Activated CD4-positive, alpha-beta T cell treated with anti-CD3 and anti-CD28 coated beads for 36 hours (primary cell): ENCODE measurements at regions of chr5 and their contacts with region 1.

Region 1: DNA sequence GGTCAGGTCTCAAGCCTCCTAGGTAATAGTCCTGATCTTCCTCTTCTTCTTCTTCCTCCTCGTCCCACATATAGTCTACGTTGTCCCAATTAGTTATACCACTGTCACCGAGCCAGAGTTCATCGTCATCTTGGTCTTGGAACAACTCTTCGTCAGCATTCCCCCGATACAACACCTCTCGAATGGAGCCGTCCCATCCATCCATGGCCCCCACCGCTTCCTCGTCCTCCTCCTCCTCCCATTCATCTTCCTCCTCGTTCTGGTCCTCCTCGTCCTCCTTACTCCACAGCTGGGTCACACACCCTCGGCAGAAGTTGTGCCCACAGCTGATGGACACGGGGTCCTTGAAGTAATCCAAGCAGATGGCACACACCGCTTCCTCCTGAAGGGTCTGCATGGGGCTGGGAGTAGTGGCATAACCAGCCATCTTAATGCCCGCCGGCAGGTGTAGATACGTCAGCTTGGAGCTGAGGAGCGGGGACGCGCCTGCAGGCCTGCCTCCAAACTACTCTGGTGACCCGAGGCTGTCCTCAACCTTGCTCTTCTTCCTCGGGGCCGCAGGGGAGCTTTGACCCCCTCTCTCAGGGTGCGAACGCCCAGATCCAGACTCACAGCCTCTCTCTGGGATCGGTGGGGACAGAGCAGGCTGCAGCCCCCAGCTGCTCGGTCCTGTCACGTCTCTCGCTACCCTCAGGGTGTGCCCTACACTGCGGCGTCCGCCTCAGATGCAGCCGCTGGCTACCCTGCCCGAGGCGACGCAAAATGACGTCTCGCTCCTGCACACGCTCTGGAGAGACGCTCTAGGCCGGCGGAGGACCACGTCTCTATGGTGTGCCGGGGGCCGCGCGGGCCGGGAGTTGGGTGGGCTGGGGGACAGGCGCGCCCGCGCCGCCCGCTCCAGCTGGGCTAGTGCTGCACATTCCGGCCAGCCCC is at the start of gene TRIM52:
- DNase-seq: peak; percentile 95
- ATAC-seq: peak; percentile 85
- H3K4me3 Mint-ChIP-seq: peak within 1 kb of the TSS; percentile 91
- H3K27ac Mint-ChIP-seq: peak within 1 kb of the TSS; percentile 95
- H3K4me1 Mint-ChIP-seq: peaks cover 38% of the 10 kb centered on the region
- H3K27me3 Mint-ChIP-seq: no peaks in the 10 kb centered on the region
- total RNA-seq, gene TRIM52: 10.4 to 13.1 TPM

Region 2: GRCh38 chr5:181243512-181244343 is 16.9 kb before region 1 on chr5 and contains the start of gene RACK1:
- CTCF ChIA-PET with region 1: interaction called, 8 read pairs
- POLR2A ChIA-PET with region 1: interaction called, 23 read pairs
- intact Hi-C with region 1: loop called (anchors 1 kb)
- DNase-seq: peak; percentile 94
- ATAC-seq: peak; percentile 70
- H3K4me3 Mint-ChIP-seq: peak within 1 kb of the TSS; percentile 91
- H3K27ac Mint-ChIP-seq: peak within 1 kb of the TSS; percentile 99
- H3K4me1 Mint-ChIP-seq: peaks cover 50% of the 10 kb centered on the region
- H3K27me3 Mint-ChIP-seq: no peaks in the 10 kb centered on the region
- total RNA-seq, gene RACK1: 2,724 to 3,901 TPM